PC-3 (cell line): ENCODE measurements at regions of chr2 and their contacts with region 1.

Region 1: DNA sequence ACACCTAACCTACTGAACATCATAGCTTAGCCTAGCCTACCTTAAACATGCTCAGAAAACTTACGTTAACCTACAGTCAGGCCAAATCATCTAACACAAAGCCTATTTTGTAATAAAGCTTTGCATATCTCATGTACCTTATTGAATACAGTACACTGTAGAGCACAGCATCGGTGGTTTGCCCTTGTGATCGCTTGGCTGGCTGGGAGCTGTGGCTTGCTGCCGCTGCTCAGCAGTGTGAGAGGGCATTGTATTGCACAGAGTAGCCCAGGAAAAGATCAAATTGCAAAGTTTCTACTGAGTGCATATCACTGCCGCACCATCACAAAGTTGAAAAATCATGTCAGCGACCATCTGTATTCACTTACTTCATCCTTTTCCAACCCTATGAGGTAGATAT is 62.3 kb upstream of the NCK2 start:
- DNase-seq: no peak
- ATAC-seq: no peak
- H3K4me3 ChIP-seq: no peak overlapping the region
- H3K27ac ChIP-seq: no peak overlapping the region
- H3K4me1 ChIP-seq: no peaks in the 10 kb centered on the region
- H3K27me3 ChIP-seq: 0 out of 2 replicates have a peak, but pooled peaks cover 4% of the 10 kb centered on the region
- CTCF ChIP-seq: no peak

Region 2: GRCh38 chr2:105104208-105104731 is 578.1 kb before region 1 on chr2:
- CTCF ChIA-PET with region 1: no interaction called
- POLR2A ChIA-PET with region 1: interaction called, 10 read pairs
- intact Hi-C with region 1: no loop called
- DNase-seq: peak; percentile 76
- ATAC-seq: no peak; the same call in 1 of the 2 replicates
- H3K4me3 ChIP-seq: no peak overlapping the region
- H3K27ac ChIP-seq: 0 out of 2 replicates have a peak overlapping the region, but pooled peaks have one; percentile 0
- H3K4me1 ChIP-seq: peaks cover 25% of the 10 kb centered on the region
- H3K27me3 ChIP-seq: no peaks in the 10 kb centered on the region
- CTCF ChIP-seq: no peak

Region 3: DNA sequence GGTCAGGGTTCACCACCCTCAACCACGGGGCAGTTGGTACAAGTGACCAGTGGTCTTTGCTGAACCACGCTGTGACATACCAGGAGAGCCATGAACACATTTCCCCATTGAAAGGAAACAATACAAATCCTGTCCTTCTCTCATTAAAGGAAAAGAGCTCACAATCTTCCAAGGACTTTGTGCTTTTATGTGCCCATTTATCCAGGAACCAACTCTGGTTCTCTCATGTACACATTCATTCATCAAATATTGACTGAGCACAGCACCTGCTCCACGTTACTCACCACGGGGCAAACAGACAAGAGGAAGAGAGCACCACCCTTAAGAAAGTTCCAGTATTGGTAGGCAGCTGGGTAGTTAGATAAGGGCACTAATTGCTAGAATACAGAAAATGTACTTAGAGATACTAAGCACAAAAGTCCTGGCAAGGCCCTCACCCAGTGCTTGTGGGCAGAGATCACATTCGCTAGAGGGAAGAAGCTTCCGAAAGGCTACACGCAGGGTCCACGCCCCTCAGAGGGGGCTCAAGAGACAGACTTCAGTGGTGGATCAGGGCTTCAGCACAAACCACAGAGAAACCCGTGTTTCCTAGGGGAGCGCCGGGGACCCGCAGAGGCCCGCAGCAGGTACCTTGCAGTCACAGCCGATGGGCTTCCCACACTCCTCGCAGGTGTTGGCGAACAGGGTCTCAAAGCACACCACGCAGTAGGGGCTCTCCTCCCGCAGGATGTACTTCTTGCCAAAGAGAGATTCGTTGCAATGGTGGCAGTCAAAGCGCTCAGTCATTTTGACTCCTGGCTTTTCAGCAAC is 296.5 kb before region 1 on chr2:
- CTCF ChIA-PET with region 1: interaction called, 14 read pairs
- POLR2A ChIA-PET with region 1: no interaction called
- intact Hi-C with region 1: no loop called
- DNase-seq: peak; percentile 70
- ATAC-seq: peak; percentile 65
- H3K4me3 ChIP-seq: no peak overlapping the region
- H3K27ac ChIP-seq: peak overlapping the region; percentile 65
- H3K4me1 ChIP-seq: peaks cover 59% of the 10 kb centered on the region
- H3K27me3 ChIP-seq: no peaks in the 10 kb centered on the region
- CTCF ChIP-seq: no peak

Region 4: DNA sequence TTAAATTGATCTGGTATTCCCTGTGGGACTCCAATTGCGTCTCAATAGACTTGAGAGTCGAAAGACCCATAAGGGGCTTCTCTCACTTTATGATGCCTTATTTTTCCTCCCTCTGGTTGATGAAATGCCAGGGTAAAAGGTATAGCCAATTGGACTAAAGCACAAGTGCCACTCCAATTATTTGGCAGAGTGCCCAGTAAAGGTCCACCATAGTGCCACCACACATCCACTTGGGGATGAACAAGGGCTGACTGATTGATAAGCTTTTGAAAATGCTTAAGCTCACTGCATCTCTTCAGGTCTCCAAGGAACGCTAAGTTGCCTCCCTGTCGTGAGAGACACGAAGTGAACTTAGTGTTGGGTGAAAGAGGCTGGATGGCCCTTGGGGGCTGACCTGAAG is 300.0 kb after region 1 on chr2:
- CTCF ChIA-PET with region 1: no interaction called
- POLR2A ChIA-PET with region 1: no interaction called
- intact Hi-C with region 1: no loop called
- DNase-seq: no peak
- ATAC-seq: no peak
- H3K4me3 ChIP-seq: no peak overlapping the region
- H3K27ac ChIP-seq: no peak overlapping the region
- H3K4me1 ChIP-seq: peaks cover 8% of the 10 kb centered on the region
- H3K27me3 ChIP-seq: no peaks in the 10 kb centered on the region
- CTCF ChIP-seq: no peak